AG04449 (cell line): ENCODE measurements at regions of chr2 and their contacts with region 1.

Region 1: DNA sequence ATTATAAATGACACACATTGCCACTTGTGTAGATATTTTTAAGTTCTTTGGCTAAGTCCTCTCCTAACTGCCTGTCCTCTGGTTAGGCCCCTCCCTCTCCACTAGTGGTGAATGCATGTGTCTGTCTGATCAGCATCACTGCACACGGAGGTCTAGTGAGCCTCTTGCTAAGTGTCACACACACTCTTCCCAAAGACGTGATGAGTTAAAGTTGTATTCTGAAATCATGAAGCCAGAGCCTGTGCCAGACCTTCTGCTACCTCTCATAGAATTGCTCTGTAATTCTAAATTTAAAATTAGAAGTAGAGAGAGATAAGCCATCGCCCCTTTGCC is 41.3 kb downstream of the RALB start:
- DNase-seq: no peak
- H3K4me3 ChIP-seq: no peak overlapping the region
- CTCF ChIP-seq: no peak

Region 2: DNA sequence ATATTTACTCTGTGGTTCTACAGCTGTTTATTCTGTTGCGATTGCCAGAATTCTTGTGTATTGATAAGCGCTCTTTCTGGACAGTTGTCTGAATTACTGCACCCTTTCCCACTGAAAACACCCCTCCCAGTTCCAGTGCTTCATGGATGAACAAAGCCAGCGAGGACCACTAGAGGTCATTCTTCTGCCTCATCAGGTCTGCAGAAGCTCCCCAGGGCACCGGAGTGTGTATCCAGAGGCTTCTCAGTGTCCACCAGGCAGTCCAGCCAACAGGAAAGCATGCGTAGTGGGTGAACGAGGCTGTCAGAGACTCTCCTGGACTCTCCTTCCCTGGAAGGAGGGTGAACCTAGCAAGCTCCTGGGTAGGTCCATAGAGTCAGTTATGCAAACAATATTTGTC is 11.3 kb after region 1 on chr2:
- CTCF ChIA-PET with region 1: interaction called, 137 read pairs
- POLR2A ChIA-PET with region 1: no interaction called
- DNase-seq: no peak
- H3K4me3 ChIP-seq: no peak overlapping the region
- CTCF ChIP-seq: peak; percentile 35